ENCODE measurements at regions of chr4 and their contacts with region 1.

Region 1: DNA sequence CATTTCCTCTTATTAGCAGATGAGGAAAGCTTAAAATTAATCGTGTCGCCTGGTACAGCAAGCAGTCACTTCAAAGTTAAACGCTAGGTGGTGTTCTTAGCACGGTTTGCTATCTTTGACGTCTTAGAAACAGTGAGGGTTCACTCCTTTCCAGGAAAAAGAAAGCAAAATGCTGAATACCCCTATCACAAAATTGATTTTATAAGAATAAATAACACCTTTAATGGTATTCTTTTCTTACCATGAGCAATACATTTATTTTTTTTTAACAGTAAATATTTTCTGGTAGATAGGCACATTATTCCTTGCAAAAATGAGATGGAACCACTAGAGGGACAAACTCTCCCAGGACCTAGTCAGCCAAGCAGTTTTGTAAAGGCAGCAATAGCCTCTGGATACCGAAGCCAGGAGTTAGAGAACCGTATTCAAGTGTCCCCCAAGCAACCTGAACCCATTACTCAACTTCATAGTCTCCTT is 153.9 kb downstream of the KDR start:
- DNase-seq: peak; percentile 32
- H3K4me3 ChIP-seq: no peak overlapping the region
- H3K27ac ChIP-seq: no peak overlapping the region
- H3K4me1 ChIP-seq: no peaks in the 10 kb centered on the region
- H3K27me3 ChIP-seq: no peaks in the 10 kb centered on the region
- CTCF ChIP-seq: peak; percentile 66 to 75

Region 2: DNA sequence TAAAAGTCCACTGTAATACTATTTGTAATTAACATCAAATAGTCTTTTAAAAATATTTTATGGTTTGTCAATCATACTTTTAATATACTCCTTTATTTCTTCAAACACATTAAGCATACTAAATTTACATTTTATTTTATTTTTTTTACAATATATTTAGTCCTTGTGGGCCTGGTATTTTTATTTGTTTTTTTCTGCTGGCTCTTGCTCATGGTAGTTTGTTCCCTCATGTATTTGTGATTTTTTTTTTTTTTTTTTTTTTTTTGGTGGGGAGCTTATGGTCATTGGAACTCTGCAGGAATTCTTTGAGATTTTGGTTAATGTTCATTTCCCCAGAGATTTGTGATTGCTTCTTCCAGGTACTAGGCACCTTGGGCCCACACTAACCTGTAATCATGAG is 557.0 kb before region 1 on chr4:
- CTCF ChIA-PET with region 1: no interaction called
- dilution Hi-C with region 1: no loop called
- in situ Hi-C with region 1: no loop called
- intact Hi-C with region 1: no loop called
- DNase-seq: no peak
- H3K4me3 ChIP-seq: no peak overlapping the region
- H3K27ac ChIP-seq: no peak overlapping the region
- H3K4me1 ChIP-seq: no peaks in the 10 kb centered on the region
- H3K27me3 ChIP-seq: no peaks in the 10 kb centered on the region
- CTCF ChIP-seq: no peak

Region 3: DNA sequence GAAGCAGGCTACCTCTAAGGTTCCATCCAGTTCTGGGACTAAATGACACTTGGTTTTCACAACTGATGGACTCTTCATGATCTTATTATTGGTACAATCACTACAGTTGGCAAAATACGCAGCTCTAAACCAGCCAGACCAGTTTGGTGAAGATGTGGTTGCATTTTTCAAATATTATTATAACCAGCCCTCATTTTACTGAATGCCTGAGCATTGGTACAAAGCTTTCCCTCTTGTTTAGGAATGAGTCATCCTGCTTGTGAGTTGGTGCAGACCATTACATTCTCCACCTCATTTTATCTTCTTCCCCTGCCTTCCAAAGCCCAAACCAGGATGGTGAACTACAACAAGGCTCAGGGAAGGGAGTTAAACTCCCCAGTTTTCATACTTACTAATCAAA is 69.2 kb before region 1 on chr4:
- CTCF ChIA-PET with region 1: no interaction called
- dilution Hi-C with region 1: no loop called
- in situ Hi-C with region 1: no loop called
- intact Hi-C with region 1: no loop called
- DNase-seq: peak; percentile 85
- H3K4me3 ChIP-seq: no peak overlapping the region
- H3K27ac ChIP-seq: no peak overlapping the region
- H3K4me1 ChIP-seq: peaks cover 17% of the 10 kb centered on the region
- H3K27me3 ChIP-seq: no peaks in the 10 kb centered on the region
- CTCF ChIP-seq: no peak

Region 4: DNA sequence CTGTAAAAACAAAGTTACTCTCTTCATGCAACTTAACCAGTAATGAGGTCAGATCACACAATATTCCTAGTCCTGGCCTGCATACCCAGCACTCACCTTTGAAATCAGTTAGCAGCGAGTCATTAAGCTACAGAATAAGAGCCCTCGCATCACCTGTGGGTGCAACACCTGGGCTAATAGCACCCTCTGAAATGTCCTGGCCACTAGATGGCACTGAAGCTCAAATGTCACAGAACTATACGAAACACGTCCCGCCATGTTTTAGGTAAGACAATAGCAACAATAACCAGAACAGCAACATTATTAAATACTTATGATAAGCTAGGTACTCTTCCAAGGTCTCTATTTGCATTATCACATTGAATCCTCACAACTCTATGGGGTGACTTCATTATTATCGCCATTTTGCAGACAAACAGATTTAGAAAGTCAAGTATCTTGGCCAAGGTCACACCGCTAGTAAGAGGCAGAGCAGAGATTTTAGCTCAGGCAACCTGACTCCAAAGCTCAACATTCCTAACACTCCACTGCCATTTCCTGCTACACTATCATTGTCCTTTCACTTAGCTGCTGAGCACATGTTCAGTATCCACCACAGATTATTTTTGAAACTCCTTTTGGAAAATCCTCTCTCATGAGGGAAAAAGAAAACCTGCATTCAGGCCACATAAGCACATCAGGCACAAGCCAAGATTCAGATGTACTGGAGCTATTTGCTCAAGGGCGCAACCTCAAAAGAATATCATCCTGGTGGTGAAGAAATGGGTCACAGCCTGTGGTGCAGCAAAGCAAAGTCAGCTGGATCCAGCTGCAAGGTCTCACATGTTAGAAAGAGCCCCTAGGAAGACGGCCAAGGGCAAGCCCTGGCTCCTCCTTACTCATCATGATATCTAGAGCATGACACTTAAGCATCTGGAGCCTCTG is 213.3 kb after region 1 on chr4:
- CTCF ChIA-PET with region 1: no interaction called
- dilution Hi-C with region 1: no loop called
- in situ Hi-C with region 1: no loop called
- intact Hi-C with region 1: loop called (anchors 1 kb)
- DNase-seq: no peak
- H3K4me3 ChIP-seq: no peak overlapping the region
- H3K27ac ChIP-seq: peak overlapping the region; percentile 45
- H3K4me1 ChIP-seq: peaks cover 20% of the 10 kb centered on the region
- H3K27me3 ChIP-seq: no peaks in the 10 kb centered on the region
- CTCF ChIP-seq: peak; percentile 51 to 77

Region 5: GRCh38 chr4:55321707-55322264 is 350.3 kb after region 1 on chr4:
- CTCF ChIA-PET with region 1: no interaction called
- dilution Hi-C with region 1: loop called (anchors 25 kb)
- in situ Hi-C with region 1: loop called in 1 of 2 experiments (anchors 10 kb)
- intact Hi-C with region 1: loop called (anchors 1 kb)
- DNase-seq: peak; percentile 63
- H3K4me3 ChIP-seq: no peak overlapping the region
- H3K27ac ChIP-seq: no peak overlapping the region
- H3K4me1 ChIP-seq: no peaks in the 10 kb centered on the region
- H3K27me3 ChIP-seq: no peaks in the 10 kb centered on the region
- CTCF ChIP-seq: peak; percentile 61 to 73

Region 6: DNA sequence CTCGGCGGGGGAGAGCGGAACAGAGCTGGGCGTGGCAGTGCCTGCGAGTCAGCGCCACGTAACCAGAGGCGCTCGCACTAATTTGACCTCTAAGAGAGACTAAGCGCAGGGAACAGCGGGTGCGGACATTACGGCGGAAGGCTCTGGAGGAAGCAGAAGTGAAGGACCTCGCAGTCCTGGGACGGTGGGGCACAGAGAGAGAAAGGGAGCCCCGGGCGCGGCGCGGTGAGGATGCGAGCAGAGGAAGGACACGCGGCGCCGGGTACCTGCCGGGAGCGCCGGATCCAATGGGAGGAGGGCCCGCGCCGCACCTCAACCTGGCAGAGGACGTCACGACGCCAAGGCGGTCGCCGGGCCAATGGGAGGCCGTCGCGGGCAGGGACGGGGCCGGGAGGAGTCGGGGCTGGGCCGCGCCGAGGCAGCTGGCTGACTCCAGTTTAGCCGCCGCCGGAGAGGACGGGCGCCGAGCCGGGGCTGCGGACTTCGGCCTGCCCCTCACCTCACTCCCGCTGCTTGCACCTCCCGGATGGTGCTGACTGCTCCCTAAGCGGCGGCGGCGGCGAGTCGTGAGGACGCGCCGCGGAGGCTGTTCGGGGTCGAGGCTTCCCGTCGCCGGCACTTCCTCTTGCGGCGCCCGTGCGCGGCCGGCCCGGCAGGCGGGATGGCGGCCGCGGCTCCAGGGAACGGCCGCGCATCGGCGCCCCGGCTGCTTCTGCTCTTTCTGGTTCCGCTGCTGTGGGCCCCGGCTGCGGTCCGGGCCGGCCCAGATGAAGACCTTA is 424.2 kb after region 1 on chr4 and contains the start of gene TMEM165:
- CTCF ChIA-PET with region 1: no interaction called
- dilution Hi-C with region 1: no loop called
- in situ Hi-C with region 1: no loop called
- intact Hi-C with region 1: loop called (anchors 5 kb)
- DNase-seq: peak; percentile 93
- H3K4me3 ChIP-seq: peak within 1 kb of the TSS; percentile 74 to 96 (median 85)
- H3K27ac ChIP-seq: peak within 1 kb of the TSS; percentile 89
- H3K4me1 ChIP-seq: peaks cover 17% of the 10 kb centered on the region
- H3K27me3 ChIP-seq: no peaks in the 10 kb centered on the region
- CTCF ChIP-seq: no peak
- total RNA-seq, gene TMEM165: 101 to 121 TPM

Region 7: GRCh38 chr4:55609393-55609866 is 637.9 kb after region 1 on chr4:
- CTCF ChIA-PET with region 1: interaction called, 10 read pairs
- dilution Hi-C with region 1: no loop called
- in situ Hi-C with region 1: no loop called
- intact Hi-C with region 1: no loop called
- DNase-seq: peak; percentile 97
- H3K4me3 ChIP-seq: peak overlapping the region in 1 of 3 experiments; percentile 35
- H3K27ac ChIP-seq: peak overlapping the region; percentile 97
- H3K4me1 ChIP-seq: peaks cover 36% of the 10 kb centered on the region
- H3K27me3 ChIP-seq: no peaks in the 10 kb centered on the region
- CTCF ChIP-seq: no peak

Measured in mammary epithelial cell (primary cell).